PC-9 (cell line): ENCODE measurements at regions of chr12 and their contacts with region 1.

Region 1: GRCh38 chr12:12813120-12814101 is at the start of gene DDX47:
- DNase-seq: peak; percentile 81 to 98
- H3K4me3 ChIP-seq: peak within 1 kb of the TSS; percentile 67
- H3K27ac ChIP-seq: peak within 1 kb of the TSS; percentile 81
- H3K4me1 ChIP-seq: peaks cover 64% of the 10 kb centered on the region
- H3K27me3 ChIP-seq: no peaks in the 10 kb centered on the region
- CTCF ChIP-seq: peak; percentile 93
- total RNA-seq, gene DDX47: 192 and 196 TPM in 2 replicates

Region 2: GRCh38 chr12:11431486-11431885 is 1381.9 kb before region 1 on chr12:
- CTCF ChIA-PET with region 1: no interaction called
- POLR2A ChIA-PET with region 1: no interaction called
- intact Hi-C with region 1: no loop called
- DNase-seq: no peak
- H3K4me3 ChIP-seq: no peak overlapping the region
- H3K27ac ChIP-seq: no peak overlapping the region
- H3K4me1 ChIP-seq: no peaks in the 10 kb centered on the region
- H3K27me3 ChIP-seq: peaks cover 40% of the 10 kb centered on the region
- CTCF ChIP-seq: no peak

Region 3: DNA sequence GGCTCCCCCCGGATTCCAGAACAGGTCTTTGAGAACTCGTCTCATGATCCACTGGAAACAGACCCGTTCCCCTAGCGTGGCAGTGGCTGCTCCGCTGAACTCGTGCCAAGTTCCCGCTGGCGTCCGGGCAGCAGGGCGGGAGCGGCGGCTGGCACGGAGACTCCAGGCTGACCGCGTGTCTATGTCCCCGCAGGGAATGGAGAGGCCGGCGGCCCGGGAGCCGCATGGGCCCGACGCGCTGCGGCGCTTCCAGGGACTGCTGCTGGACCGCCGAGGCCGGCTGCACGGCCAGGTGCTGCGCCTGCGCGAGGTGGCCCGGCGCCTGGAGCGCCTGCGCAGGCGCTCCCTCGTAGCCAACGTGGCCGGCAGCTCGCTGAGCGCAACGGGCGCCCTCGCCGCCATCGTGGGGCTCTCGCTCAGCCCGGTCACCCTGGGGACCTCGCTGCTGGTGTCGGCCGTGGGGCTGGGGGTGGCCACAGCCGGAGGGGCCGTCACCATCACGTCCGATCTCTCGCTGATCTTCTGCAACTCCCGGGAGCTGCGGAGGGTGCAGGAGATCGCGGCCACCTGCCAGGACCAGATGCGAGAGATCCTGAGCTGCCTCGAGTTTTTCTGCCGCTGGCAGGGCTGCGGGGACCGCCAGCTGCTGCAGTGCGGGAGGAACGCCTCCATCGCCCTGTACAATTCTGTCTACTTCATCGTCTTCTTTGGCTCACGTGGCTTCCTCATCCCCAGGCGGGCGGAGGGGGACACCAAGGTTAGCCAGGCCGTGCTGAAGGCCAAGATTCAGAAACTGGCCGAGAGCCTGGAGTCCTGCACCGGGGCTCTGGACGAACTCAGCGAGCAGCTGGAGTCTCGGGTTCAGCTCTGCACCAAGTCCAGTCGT is 26.5 kb before region 1 on chr12:
- CTCF ChIA-PET with region 1: interaction called, 19 read pairs
- POLR2A ChIA-PET with region 1: interaction called, 15 read pairs
- intact Hi-C with region 1: loop called (anchors 1 kb)
- DNase-seq: peak; percentile 57 to 83
- H3K4me3 ChIP-seq: peak overlapping the region; percentile 61; the same call in 1 of the 2 replicates
- H3K27ac ChIP-seq: peak overlapping the region; percentile 76
- H3K4me1 ChIP-seq: peaks cover 44% of the 10 kb centered on the region
- H3K27me3 ChIP-seq: no peaks in the 10 kb centered on the region
- CTCF ChIP-seq: no peak

Region 4: DNA sequence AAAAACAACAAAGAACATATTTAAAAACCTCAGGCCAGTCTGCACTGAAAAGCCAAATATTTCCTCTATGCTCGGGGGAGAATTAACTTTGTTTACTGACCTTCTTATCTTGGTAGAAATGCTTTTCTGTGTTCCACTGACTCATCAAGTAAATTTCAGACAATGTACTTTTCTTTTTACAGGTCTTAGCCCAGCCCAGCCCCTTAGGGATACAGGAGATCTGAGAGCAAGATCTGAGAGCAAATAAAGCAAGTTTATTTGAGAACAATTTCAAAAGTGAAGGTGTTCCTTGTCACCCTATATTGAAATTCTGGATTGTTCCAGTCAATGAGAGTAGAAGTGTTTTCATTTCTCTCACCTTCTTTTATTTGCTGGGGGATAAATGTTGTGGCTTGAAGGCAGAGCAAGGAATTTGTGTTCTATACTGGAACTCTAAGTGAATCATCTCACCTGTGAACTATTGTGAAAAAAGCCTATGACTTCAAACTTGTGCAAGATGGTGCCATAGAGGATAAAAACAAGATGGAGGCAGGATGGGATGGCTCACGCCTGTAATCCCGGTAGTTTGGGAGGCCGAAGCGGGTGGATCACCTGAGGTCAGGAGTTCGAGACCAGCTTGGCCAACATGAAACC is 70.1 kb after region 1 on chr12:
- CTCF ChIA-PET with region 1: interaction called, 17 read pairs
- POLR2A ChIA-PET with region 1: no interaction called
- intact Hi-C with region 1: no loop called
- DNase-seq: peak; percentile 74 to 99
- H3K4me3 ChIP-seq: peak overlapping the region; percentile 55; the same call in 1 of the 2 replicates
- H3K27ac ChIP-seq: peak overlapping the region; percentile 96
- H3K4me1 ChIP-seq: peaks cover 79% of the 10 kb centered on the region
- H3K27me3 ChIP-seq: no peaks in the 10 kb centered on the region
- CTCF ChIP-seq: no peak

Region 5: GRCh38 chr12:12916135-12916944 is 102.9 kb after region 1 on chr12:
- CTCF ChIA-PET with region 1: interaction called, 10 read pairs
- POLR2A ChIA-PET with region 1: interaction called, 6 read pairs
- intact Hi-C with region 1: no loop called
- DNase-seq: peak; percentile 55 to 82
- H3K4me3 ChIP-seq: no peak overlapping the region
- H3K27ac ChIP-seq: no peak overlapping the region
- H3K4me1 ChIP-seq: 0 out of 2 replicates have a peak, but pooled peaks cover 5% of the 10 kb centered on the region
- H3K27me3 ChIP-seq: no peaks in the 10 kb centered on the region
- CTCF ChIP-seq: peak; percentile 95

Region 6: GRCh38 chr12:12975322-12976077 is 162.1 kb after region 1 on chr12:
- CTCF ChIA-PET with region 1: interaction called, 16 read pairs
- POLR2A ChIA-PET with region 1: interaction called, 3 read pairs
- intact Hi-C with region 1: no loop called
- DNase-seq: peak in 1 of 2 experiments; percentile 66
- H3K4me3 ChIP-seq: no peak overlapping the region
- H3K27ac ChIP-seq: peak overlapping the region; percentile 66
- H3K4me1 ChIP-seq: peaks cover 36% of the 10 kb centered on the region
- H3K27me3 ChIP-seq: no peaks in the 10 kb centered on the region
- CTCF ChIP-seq: peak; percentile 48

Region 7: GRCh38 chr12:13154027-13154538 is 340.7 kb after region 1 on chr12:
- CTCF ChIA-PET with region 1: no interaction called
- POLR2A ChIA-PET with region 1: no interaction called
- intact Hi-C with region 1: no loop called
- DNase-seq: peak in 1 of 2 experiments; percentile 64
- H3K4me3 ChIP-seq: no peak overlapping the region
- H3K27ac ChIP-seq: peak overlapping the region; percentile 80
- H3K4me1 ChIP-seq: peaks cover 22% of the 10 kb centered on the region
- H3K27me3 ChIP-seq: no peaks in the 10 kb centered on the region
- CTCF ChIP-seq: no peak

Region 8: GRCh38 chr12:13167222-13167621 is 353.8 kb after region 1 on chr12:
- CTCF ChIA-PET with region 1: no interaction called
- POLR2A ChIA-PET with region 1: no interaction called
- intact Hi-C with region 1: no loop called
- DNase-seq: peak; percentile 89 to 97
- H3K4me3 ChIP-seq: no peak overlapping the region
- H3K27ac ChIP-seq: peak overlapping the region; percentile 97
- H3K4me1 ChIP-seq: peaks cover 88% of the 10 kb centered on the region
- H3K27me3 ChIP-seq: no peaks in the 10 kb centered on the region
- CTCF ChIP-seq: no peak